MCF 10A (cell line): ENCODE measurements at regions of chr4 and their contacts with region 1.

Region 1: DNA sequence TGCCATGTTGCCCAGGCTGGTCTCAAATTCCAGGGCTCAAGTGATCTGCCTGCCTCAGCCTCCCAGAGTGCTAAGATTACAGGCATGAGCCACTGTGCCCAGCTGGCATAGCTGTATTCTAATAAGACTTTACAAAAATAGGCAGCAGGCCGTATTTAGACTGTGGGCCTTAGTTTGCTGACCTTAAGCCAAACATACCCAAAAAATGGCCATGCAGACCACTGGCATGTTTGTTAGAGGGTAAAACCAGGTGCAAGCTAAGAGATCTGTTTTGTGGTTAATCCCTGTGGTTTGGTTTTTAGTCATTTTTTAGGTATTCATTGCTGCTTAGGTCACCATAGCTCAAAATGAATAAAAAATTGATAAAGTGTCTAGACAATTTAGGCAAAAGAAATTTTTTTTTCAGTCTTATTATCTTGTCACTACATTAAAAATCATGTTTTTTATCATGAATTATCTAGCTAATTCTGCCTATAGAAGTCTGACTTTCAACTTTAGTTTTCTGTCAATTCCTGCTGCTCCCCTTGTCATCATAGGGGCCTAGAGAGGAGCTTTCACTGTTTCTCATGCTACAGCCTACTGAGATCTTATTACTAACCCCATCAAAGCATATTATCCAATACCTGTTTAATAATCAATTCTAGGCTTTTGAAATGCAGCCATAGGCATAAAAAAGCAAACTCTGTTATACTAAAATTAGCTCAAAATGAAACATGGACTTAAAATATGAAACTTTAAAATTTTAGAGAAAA is 7.5 kb upstream of the SPINK2 start:
- DNase-seq: no peak
- H3K4me3 Mint-ChIP-seq: no peak overlapping the region
- H3K27ac Mint-ChIP-seq: no peak overlapping the region
- H3K4me1 Mint-ChIP-seq: no peaks in the 10 kb centered on the region
- H3K27me3 Mint-ChIP-seq: no peaks in the 10 kb centered on the region
- CTCF ChIP-seq: no peak

Region 2: DNA sequence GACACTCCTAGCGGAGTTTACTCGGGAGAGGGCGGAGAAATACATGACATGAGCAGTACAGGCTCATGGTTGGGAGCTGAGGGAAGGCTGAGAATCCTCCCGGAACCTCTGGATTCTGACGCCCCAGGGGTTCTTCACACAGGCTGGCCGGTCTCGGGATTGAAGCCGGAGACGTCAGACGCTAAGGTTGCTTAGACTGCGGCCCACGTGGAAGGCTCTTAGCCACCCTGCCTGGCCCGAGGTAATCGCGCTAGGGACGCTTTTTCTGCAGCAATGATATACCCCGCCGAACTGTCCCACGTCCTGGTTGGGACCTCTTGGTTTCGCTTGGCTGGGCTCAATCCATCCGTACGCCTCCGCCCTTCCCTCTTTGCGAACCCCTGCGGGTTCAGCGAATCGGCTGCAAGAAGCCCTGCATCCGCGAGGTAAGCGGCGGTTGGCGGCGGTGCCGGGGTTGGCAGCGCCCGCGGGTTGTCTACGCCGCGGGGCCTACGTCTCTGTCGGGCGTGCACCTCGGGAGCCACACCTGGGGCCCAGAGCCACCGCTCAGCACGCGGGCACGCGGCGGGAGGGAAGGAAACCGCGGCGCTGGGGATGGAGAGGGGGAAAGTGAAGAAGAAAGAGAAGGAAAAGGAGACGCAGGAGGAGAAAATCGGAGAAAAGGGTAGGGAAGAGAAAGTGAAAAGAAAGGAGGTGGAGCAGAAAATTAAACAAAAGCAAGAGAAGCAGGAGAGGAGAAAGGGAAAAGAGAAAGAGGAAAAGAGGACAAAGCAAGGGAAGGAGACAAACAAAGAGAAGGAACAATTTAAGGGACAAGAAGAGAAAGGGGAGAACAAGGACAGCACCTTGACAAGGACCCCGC is 323.5 kb before region 1 on chr4 and contains the start of gene ARL9:
- CTCF ChIA-PET with region 1: no interaction called
- POLR2A ChIA-PET with region 1: no interaction called
- intact Hi-C with region 1: loop called (anchors 10 kb)
- DNase-seq: peak; percentile 44
- H3K4me3 Mint-ChIP-seq: peak within 1 kb of the TSS; percentile 60
- H3K27ac Mint-ChIP-seq: peak within 1 kb of the TSS; percentile 76
- H3K4me1 Mint-ChIP-seq: no peaks in the 10 kb centered on the region
- H3K27me3 Mint-ChIP-seq: no peaks in the 10 kb centered on the region
- CTCF ChIP-seq: no peak
- total RNA-seq, gene ARL9: 0.22 and 0.28 TPM in 2 replicates

Region 3: DNA sequence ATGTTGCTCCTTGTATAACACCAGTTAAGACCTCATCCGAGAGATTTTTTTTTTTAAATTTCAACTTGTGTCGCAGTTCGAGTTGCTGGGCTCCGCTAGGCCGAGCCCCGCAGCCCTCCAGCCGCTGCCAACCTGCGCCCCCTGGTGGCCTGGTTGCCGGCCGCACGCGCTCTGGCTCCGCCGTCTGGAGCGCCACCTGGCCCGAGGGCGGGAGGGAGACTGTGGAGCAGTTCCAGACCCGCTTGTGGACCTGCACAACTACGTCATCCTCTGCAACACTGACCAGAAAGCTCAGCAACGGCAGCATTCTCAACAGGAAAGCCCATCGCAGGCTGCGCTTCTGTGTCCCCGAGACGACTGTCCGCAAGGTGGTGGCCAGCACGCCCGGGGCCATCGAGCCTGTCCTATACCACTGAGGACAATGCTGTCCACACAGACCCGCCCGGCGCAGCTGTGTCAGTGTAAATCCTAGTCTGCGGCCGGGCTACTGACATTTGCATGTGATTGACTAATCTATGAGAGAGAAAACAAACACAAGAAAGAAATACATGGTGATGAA is 284.3 kb before region 1 on chr4:
- CTCF ChIA-PET with region 1: no interaction called
- POLR2A ChIA-PET with region 1: no interaction called
- intact Hi-C with region 1: loop called (anchors 10 kb)
- DNase-seq: peak; percentile 77
- H3K4me3 Mint-ChIP-seq: peak overlapping the region; percentile 75
- H3K27ac Mint-ChIP-seq: no peak overlapping the region
- H3K4me1 Mint-ChIP-seq: peaks cover 5% of the 10 kb centered on the region
- H3K27me3 Mint-ChIP-seq: no peaks in the 10 kb centered on the region
- CTCF ChIP-seq: peak; percentile 96

Region 4: GRCh38 chr4:56653461-56654237 is 175.3 kb before region 1 on chr4:
- CTCF ChIA-PET with region 1: no interaction called
- POLR2A ChIA-PET with region 1: no interaction called
- intact Hi-C with region 1: no loop called
- DNase-seq: no peak
- H3K4me3 Mint-ChIP-seq: no peak overlapping the region
- H3K27ac Mint-ChIP-seq: no peak overlapping the region
- H3K4me1 Mint-ChIP-seq: peaks cover 17% of the 10 kb centered on the region
- H3K27me3 Mint-ChIP-seq: peaks cover 42% of the 10 kb centered on the region
- CTCF ChIP-seq: no peak

Region 5: DNA sequence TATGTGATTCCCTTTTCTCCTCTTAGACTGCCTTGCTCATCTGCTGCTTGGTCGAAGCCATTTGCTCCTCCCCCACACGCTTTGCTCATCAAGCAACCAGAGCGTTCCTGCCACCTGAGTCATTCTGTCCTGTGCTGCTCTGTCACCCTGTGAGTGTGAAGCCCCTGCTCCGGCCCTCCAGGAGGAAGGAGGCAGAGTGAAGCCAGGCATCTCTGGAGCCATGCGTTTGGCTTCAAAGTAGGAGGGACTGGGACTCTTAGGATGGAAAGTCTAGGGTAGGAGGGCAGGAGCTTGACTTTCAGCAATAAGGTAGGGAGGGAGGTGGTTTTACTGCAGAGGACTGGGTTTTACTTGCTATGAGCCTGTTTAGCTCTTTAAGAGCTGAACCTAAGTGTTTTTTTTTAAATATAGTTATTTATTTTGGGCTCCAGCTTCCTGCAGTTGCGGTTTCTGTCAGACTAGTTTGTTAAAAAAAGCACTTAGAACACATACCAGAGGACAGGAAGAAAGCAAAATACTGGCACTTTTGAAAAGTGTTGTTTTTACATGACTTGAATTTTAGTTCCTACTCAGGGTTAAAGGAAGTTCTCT is 71.0 kb before region 1 on chr4:
- CTCF ChIA-PET with region 1: no interaction called
- POLR2A ChIA-PET with region 1: no interaction called
- intact Hi-C with region 1: no loop called
- DNase-seq: peak; percentile 87
- H3K4me3 Mint-ChIP-seq: peak overlapping the region; percentile 34
- H3K27ac Mint-ChIP-seq: peak overlapping the region; percentile 88
- H3K4me1 Mint-ChIP-seq: peaks cover 30% of the 10 kb centered on the region
- H3K27me3 Mint-ChIP-seq: no peaks in the 10 kb centered on the region
- CTCF ChIP-seq: no peak

Region 6: GRCh38 chr4:56937262-56937661 is 108.3 kb after region 1 on chr4:
- CTCF ChIA-PET with region 1: no interaction called
- POLR2A ChIA-PET with region 1: no interaction called
- intact Hi-C with region 1: no loop called
- DNase-seq: peak; percentile 73
- H3K4me3 Mint-ChIP-seq: no peak overlapping the region
- H3K27ac Mint-ChIP-seq: peak overlapping the region; percentile 63
- H3K4me1 Mint-ChIP-seq: peaks cover 13% of the 10 kb centered on the region
- H3K27me3 Mint-ChIP-seq: no peaks in the 10 kb centered on the region
- CTCF ChIP-seq: no peak

Region 7: GRCh38 chr4:57158221-57158620 is 329.3 kb after region 1 on chr4:
- CTCF ChIA-PET with region 1: no interaction called
- POLR2A ChIA-PET with region 1: no interaction called
- intact Hi-C with region 1: no loop called
- DNase-seq: no peak
- H3K4me3 Mint-ChIP-seq: no peak overlapping the region
- H3K27ac Mint-ChIP-seq: no peak overlapping the region
- H3K4me1 Mint-ChIP-seq: peaks cover 26% of the 10 kb centered on the region
- H3K27me3 Mint-ChIP-seq: no peaks in the 10 kb centered on the region
- CTCF ChIP-seq: no peak